ENCODE measurements at regions of chr9 and their contacts with region 1.

Region 1: DNA sequence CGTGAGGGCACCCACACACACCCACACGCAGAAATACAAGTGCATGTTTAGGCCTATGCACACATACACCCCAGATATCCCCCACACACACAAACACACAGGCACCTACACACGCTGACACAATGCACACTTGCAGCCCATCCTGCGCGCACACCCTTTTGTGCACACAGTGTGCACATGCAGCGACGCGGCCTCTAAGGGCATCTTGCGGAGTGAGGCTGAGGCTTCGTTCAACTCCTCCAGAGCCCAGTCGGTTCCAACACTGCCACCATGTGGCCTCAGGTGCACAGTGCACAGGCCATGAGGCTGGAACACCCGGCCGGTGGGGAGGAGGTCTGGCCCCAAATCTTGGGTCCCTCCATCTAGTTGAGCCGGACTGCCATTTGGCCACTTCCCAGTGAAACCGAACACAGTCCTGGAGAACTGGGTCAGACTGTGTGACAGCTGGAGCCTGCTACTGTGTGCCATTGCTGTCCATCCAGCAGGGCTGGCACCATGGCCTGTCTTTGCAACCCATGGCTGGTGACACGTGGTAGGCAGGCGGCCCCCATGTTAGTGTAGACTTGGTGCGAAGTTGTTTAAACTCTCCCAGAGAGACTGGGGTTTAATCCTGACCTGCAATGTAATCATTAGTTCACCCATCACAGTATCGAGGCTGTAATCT is 97.7 kb upstream of the MVB12B start:
- DNase-seq: peak; percentile 63
- H3K4me3 ChIP-seq: no peak overlapping the region
- H3K27ac ChIP-seq: no peak overlapping the region
- H3K4me1 ChIP-seq: no peaks in the 10 kb centered on the region
- H3K27me3 ChIP-seq: no peaks in the 10 kb centered on the region
- CTCF ChIP-seq: peak; percentile 68 to 93 (median 85)
- POLR2A ChIP-seq: no peak

Region 2: GRCh38 chr9:125558453-125559092 is 670.3 kb before region 1 on chr9:
- intact Hi-C with region 1: loop called (anchors 10 kb)
- DNase-seq: peak; percentile 59
- H3K4me3 ChIP-seq: no peak overlapping the region
- H3K27ac ChIP-seq: no peak overlapping the region
- H3K4me1 ChIP-seq: no peaks in the 10 kb centered on the region
- H3K27me3 ChIP-seq: no peaks in the 10 kb centered on the region
- CTCF ChIP-seq: peak; percentile 41 to 74 (median 64)
- POLR2A ChIP-seq: no peak

Region 3: DNA sequence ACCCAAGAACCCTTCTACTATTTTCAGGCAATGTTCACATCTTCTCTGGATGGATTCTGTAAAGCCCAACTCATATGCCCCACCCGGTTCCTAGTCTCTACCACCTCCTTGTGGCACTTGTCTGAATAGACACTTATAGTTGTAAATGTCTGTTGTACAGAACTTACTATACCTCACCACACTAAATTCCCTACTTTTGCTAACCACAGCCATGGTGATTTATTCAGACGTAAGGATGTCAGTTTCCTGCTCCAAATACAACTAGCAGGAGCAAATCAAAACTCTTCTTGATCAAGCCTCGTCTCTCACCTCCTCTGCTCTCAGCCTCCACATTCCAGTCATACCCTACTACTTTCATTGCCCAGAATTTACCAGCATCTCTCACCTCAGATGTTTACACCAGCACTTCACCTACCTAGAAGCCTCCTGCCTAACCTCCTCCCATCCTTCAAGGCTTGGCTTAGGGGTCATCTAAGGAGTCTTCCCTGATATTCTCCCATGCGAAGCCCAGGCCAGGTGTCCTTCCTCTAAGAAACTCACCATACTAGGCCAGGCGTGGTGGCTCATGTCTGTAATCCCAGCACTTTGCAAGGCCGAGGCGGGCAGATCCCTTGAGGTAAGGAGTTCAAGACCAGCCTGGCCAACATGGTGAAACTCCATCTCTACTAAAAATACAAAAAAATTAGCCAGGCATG is 597.4 kb before region 1 on chr9:
- intact Hi-C with region 1: loop called (anchors 10 kb)
- DNase-seq: peak; percentile 12
- H3K4me3 ChIP-seq: no peak overlapping the region
- H3K27ac ChIP-seq: no peak overlapping the region
- H3K4me1 ChIP-seq: peaks cover 8% of the 10 kb centered on the region
- H3K27me3 ChIP-seq: no peaks in the 10 kb centered on the region
- CTCF ChIP-seq: peak in 3 of 4 experiments; percentile 49 to 64 (median 53)
- POLR2A ChIP-seq: no peak

Measured in prostate gland (tissue), 2 donors.